ENCODE measurements at regions of chr4 and their contacts with region 1.

Region 1: DNA sequence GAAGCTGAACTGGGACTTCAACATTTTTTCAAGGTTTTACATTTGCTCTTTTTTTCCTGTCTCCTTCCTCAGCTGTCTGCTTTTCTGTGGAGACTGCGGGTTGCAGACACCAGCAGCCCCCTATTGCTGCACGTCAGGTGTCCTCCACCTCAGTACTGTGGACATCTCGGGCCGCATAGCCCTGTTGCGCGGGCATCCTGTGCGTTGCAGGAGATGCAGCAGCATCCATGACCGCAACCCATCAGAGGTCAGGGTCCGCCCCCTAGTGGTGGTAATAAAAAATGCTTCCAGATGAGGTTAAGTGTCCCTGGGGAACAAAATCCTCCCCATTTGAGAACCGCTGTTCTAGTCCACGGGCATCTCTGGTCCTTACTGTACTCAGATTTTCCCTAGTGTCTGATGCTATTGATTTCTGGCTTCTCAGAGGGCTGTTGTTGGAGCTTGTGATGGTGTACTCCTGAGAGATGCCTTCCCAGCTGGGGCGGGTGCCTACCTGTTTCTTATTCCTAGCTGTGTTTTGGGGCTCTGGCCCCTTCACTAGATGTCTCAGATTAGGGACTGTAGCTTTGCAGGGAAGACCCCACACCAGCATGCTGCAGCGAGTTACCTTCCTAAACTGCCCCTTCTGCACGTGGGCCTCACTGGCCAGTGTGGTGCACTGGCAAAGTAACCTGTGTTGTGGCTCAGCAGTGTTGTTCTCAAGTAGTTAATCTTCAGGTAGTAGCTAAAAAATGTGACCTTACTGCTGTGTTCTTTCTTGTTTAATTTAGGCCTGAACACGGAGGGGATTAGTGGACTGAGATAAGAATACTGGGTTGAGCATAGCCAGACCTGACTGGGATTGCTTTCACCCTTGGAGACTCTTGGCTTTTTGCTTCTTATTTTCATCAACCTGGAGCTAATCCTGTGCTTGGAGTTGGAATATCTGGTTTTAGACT is 28.2 kb downstream of the NSD2 start:
- DNase-seq: peak; percentile 61 to 78 (median 77)
- ATAC-seq: peak; percentile 85 to 91
- H3K4me3 ChIP-seq: no peak overlapping the region
- H3K27ac ChIP-seq: no peak overlapping the region
- H3K4me1 ChIP-seq: no peaks in the 10 kb centered on the region
- H3K27me3 ChIP-seq: no peaks in the 10 kb centered on the region

Region 2: DNA sequence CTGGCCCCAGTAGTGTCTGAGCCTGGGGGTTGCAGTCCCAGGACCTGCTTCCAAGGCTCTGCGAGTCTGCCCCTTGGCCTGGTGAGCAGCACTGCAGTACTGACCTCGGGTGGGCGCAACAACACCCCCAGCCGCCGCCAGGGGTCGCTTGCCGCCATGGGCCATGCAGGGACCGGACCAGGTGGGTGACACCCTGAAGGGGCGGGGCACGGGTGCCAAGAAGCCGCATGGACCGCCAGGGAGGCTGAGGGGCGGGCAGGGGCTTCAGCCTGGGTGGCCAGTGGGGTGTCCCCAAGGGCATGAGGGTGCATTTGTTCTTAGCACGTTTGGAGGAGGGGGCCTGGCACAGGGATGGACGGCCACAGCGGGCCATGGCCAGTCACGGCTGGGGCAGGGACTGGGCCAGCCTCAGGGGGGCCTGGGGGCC is 153.1 kb before region 1 on chr4:
- intact Hi-C with region 1: loop called in 3 of 4 experiments (anchors 5 kb)
- DNase-seq: peak; percentile 81 to 92 (median 89)
- ATAC-seq: peak; percentile 60 to 78
- H3K4me3 ChIP-seq: no peak overlapping the region
- H3K27ac ChIP-seq: no peak overlapping the region
- H3K4me1 ChIP-seq: no peaks in the 10 kb centered on the region
- H3K27me3 ChIP-seq: no peaks in the 10 kb centered on the region

Region 3: GRCh38 chr4:1752284-1753041 is 147.0 kb before region 1 on chr4:
- intact Hi-C with region 1: loop called in 3 of 4 experiments (anchors 5 kb)
- DNase-seq: peak in 2 of 3 donors; percentile 38 to 75
- ATAC-seq: peak; percentile 8 to 59
- H3K4me3 ChIP-seq: no peak overlapping the region
- H3K27ac ChIP-seq: no peak overlapping the region
- H3K4me1 ChIP-seq: no peaks in the 10 kb centered on the region
- H3K27me3 ChIP-seq: no peaks in the 10 kb centered on the region

Region 4: GRCh38 chr4:1763550-1764080 is 135.8 kb before region 1 on chr4:
- intact Hi-C with region 1: loop called in 1 of 4 experiments (anchors 5 kb)
- DNase-seq: peak; percentile 60 to 85 (median 79)
- ATAC-seq: peak; percentile 31 to 40
- H3K4me3 ChIP-seq: peak overlapping the region; percentile 8
- H3K27ac ChIP-seq: no peak overlapping the region
- H3K4me1 ChIP-seq: peaks cover 2% of the 10 kb centered on the region
- H3K27me3 ChIP-seq: no peaks in the 10 kb centered on the region

Region 5: GRCh38 chr4:1960170-1960825 is 60.9 kb after region 1 on chr4:
- intact Hi-C with region 1: no loop called
- DNase-seq: no peak
- ATAC-seq: peak; percentile 39 to 56
- H3K4me3 ChIP-seq: no peak overlapping the region
- H3K27ac ChIP-seq: no peak overlapping the region
- H3K4me1 ChIP-seq: peaks cover 4% of the 10 kb centered on the region
- H3K27me3 ChIP-seq: no peaks in the 10 kb centered on the region